ENCODE measurements at regions of chr11 and their contacts with region 1.

Region 1: GRCh38 chr11:7986768-7987559 is at the start of gene EIF3F:
- DNase-seq: peak; percentile 100
- H3K4me3 ChIP-seq: peak within 1 kb of the TSS; percentile 56 to 93 (median 86)
- H3K27ac ChIP-seq: peak within 1 kb of the TSS; percentile 69 to 87
- H3K4me1 ChIP-seq: peaks cover 6 to 24% (median 18%) of the 10 kb centered on the region in 4 experiments
- H3K27me3 ChIP-seq: peaks cover 0 to 4% (median 0%) of the 10 kb centered on the region in 5 experiments

Region 2: DNA sequence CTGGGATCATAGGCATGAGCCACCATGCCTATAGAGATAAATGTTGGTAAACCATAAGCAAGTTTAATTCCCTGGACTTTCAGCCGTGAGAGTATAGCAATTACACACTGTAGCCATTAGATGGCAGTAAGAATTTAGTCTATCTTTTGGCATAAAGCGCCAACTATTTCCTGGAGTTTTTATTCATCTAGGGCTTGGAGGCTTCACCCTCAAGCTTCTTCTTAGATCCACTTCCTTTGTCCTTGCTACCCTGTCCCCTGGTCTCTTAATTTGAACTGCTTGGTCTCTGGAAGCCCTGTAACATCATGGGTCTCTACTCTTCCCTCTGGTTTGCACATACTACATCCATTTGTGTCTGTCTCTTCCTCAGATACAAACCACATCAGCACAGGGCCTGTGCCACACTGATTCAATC is 94.1 kb before region 1 on chr11:
- CTCF ChIA-PET with region 1: interaction called, 10 read pairs
- POLR2A ChIA-PET with region 1: no interaction called
- DNase-seq: peak; percentile 46 to 61 (median 59)
- H3K4me3 ChIP-seq: no peak overlapping the region
- H3K27ac ChIP-seq: no peak overlapping the region
- H3K4me1 ChIP-seq: peaks cover 0 to 2% (median 0%) of the 10 kb centered on the region in 4 experiments
- H3K27me3 ChIP-seq: peaks cover 2 to 16% (median 6%) of the 10 kb centered on the region in 5 experiments